Activated CD4-positive, alpha-beta T cell treated with anti-CD3 and anti-CD28 coated beads for 36 hours (primary cell): ENCODE measurements at regions of chr7 and their contacts with region 1.

Region 1: GRCh38 chr7:100673300-100673941 is at the start of gene GNB2:
- DNase-seq: peak; percentile 99
- ATAC-seq: peak; percentile 78
- H3K4me3 Mint-ChIP-seq: peak within 1 kb of the TSS; percentile 94
- H3K27ac Mint-ChIP-seq: peak within 1 kb of the TSS; percentile 93
- H3K4me1 Mint-ChIP-seq: peaks cover 12% of the 10 kb centered on the region
- H3K27me3 Mint-ChIP-seq: no peaks in the 10 kb centered on the region
- total RNA-seq, gene GNB2: 172 to 200 TPM

Region 2: GRCh38 chr7:100478966-100479665 is 194.3 kb before region 1 on chr7 and contains the start of gene TSC22D4:
- CTCF ChIA-PET with region 1: no interaction called
- POLR2A ChIA-PET with region 1: no interaction called
- intact Hi-C with region 1: loop called in 1 of 2 experiments (anchors 1 kb)
- DNase-seq: peak; percentile 96
- ATAC-seq: peak; percentile 79
- H3K4me3 Mint-ChIP-seq: peak within 1 kb of the TSS; percentile 92
- H3K27ac Mint-ChIP-seq: peak within 1 kb of the TSS; percentile 94
- H3K4me1 Mint-ChIP-seq: peaks cover 41% of the 10 kb centered on the region
- H3K27me3 Mint-ChIP-seq: no peaks in the 10 kb centered on the region
- total RNA-seq, gene TSC22D4: 78.5 to 85.7 TPM

Region 3: GRCh38 chr7:100611974-100612729 is 61.3 kb before region 1 on chr7 and contains the start of gene MOSPD3:
- CTCF ChIA-PET with region 1: no interaction called
- POLR2A ChIA-PET with region 1: interaction called, 4 read pairs
- intact Hi-C with region 1: loop called (anchors 1 kb)
- DNase-seq: peak; percentile 99
- ATAC-seq: peak; percentile 94
- H3K4me3 Mint-ChIP-seq: peak within 1 kb of the TSS; percentile 83
- H3K27ac Mint-ChIP-seq: peak within 1 kb of the TSS; percentile 100
- H3K4me1 Mint-ChIP-seq: peaks cover 17% of the 10 kb centered on the region
- H3K27me3 Mint-ChIP-seq: no peaks in the 10 kb centered on the region
- total RNA-seq, gene MOSPD3: 14.4 to 19.9 TPM

Region 4: DNA sequence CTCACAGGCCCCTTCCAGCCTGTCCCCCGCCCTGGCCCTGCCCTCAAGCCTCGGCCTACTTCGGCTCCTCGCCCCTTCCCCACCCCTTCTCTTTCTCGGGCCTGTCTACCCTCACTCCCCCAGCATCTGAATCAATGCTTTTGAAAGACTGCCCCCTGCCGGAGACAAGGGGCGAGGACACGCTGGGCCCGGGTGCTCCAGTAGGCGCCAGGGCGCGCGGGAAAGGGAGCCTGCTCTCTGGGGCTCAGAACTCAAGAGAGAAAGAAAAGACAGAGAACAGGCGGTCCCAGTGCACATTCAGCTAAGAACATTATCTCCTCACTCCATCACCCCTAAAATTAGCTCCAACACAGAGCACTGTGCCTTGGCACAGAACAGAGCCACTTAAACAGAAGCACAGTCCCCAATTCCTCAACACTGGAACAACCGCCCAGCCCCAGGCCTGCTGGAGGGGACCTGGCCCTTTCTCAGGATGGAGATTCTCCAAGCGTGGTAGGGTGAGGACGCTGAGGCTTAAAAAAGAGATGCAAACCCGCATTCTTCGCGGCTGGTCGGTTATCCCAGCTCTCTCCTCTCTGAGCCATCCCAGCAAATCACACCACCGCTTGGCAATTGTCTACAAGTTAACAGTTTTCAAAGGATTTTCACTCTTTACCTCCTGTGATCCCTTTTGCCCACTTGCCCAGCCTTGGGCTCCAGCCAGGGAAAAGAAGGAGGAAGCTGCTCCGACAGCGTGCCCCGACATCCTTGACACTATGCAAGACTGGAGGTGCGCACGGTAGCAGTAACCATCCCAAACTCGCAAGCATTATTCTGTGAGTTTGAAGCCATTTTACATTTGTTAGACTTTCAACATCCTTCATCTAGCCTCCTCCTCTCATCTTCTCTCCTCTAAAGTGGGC is 18.5 kb after region 1 on chr7:
- CTCF ChIA-PET with region 1: interaction called, 9 read pairs
- POLR2A ChIA-PET with region 1: no interaction called
- intact Hi-C with region 1: loop called (anchors 1 to 2 kb)
- DNase-seq: peak; percentile 92
- ATAC-seq: peak; percentile 78
- H3K4me3 Mint-ChIP-seq: peak overlapping the region; percentile 89
- H3K27ac Mint-ChIP-seq: peak overlapping the region; percentile 88
- H3K4me1 Mint-ChIP-seq: peaks cover 48% of the 10 kb centered on the region
- H3K27me3 Mint-ChIP-seq: no peaks in the 10 kb centered on the region

Region 5: DNA sequence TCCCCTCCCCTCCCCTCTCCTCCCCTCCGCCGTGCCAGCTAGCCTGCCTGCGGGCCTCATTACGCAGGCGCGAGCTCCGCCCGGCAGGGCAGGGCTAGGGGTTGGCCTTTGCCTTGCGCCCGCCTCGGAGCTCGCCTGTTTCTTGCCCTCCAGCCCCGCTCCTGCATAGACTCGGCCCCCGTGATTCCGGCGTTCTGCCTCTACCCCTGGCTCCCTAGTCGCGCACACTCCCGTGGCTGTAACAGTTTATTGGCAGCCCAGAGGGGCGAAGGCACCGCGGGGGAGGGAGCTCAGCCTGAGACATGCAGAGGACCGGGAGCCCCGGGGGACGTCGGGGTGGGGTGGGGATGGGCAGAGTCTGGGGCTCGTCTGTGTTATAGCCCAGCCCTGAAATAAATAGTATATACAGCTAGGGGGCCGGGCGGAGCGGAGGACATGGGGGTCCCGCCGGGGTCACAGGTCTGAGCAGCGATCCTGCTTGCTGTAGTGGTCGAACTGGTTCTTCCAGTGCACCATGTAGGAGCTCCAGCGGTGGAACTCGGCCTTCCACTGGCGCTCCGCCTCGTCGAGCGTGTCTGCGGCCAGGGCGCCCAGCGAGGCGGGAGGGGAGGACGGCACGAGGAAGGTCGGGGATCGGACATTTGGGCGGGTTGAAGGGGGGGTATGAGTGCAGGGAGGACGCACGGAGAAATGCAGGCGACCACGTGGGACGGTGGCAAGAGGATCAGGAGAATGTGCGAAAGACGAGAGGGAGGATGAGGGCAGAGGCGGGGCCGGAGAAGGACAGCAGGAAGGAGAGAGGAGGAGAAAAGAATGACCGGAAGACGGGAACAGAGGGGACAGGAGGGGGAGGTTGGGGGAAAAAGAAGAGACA is 216.6 kb after region 1 on chr7:
- CTCF ChIA-PET with region 1: no interaction called
- POLR2A ChIA-PET with region 1: no interaction called
- intact Hi-C with region 1: loop called in 1 of 2 experiments (anchors 1 kb)
- DNase-seq: peak; percentile 96
- ATAC-seq: peak; percentile 95
- H3K4me3 Mint-ChIP-seq: peak overlapping the region; percentile 77
- H3K27ac Mint-ChIP-seq: no peak overlapping the region
- H3K4me1 Mint-ChIP-seq: peaks cover 38% of the 10 kb centered on the region
- H3K27me3 Mint-ChIP-seq: peaks cover 14% of the 10 kb centered on the region

Region 6: DNA sequence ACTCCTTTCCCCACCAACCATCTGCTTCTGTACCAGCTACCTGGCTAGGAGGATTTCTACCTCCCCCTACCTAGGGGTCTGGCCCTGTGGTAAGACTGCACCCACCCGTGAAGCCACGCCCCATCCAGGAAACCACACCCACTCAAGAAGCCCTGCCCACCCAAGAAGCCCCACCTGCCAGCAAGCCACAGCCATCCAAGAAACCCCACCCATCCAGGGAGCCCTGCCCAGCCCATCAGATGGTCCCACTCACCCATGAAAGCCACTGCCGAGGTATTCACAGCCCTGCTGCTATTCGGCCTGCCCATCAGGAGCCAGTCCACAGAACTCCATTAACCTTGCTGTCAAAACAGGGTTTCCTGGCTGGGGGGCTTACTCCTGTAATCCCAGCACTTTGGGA is 260.3 kb after region 1 on chr7:
- CTCF ChIA-PET with region 1: no interaction called
- POLR2A ChIA-PET with region 1: no interaction called
- intact Hi-C with region 1: no loop called
- DNase-seq: no peak
- ATAC-seq: no peak
- H3K4me3 Mint-ChIP-seq: no peak overlapping the region
- H3K27ac Mint-ChIP-seq: no peak overlapping the region
- H3K4me1 Mint-ChIP-seq: no peaks in the 10 kb centered on the region
- H3K27me3 Mint-ChIP-seq: peaks cover 10% of the 10 kb centered on the region